WTC11 (cell line): ENCODE measurements at regions of chr10 and their contacts with region 1.

Region 1: DNA sequence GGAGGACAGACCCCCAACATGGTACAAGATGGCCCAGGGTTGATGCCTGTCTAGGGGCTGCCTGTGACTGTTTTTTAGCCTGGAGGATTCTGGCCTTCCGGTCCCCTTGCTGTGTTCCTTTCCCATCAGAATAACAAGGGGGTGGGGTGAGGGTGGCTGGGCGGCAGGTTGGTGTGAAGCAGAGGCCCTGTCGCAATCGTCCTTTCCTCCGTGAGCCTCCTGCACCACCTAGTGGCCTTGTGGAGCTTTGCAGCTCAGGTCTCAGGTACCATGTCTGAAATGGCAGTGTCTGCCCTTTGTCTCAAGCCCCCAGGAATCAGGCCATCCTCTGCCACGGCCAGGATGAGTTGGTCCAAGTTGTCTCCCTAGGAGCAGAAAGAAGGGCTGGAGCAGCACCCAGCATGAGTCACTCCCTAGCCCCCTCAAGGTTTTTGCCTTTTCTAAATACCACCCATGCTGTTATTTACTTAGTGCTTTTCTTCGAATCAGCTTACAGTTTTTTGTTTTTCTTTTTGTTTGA is 24.2 kb downstream of the TACR2 start:
- DNase-seq: peak; percentile 92
- ATAC-seq: peak; percentile 88
- H3K4me3 Mint-ChIP-seq: no peak overlapping the region
- H3K27ac Mint-ChIP-seq: peak overlapping the region; percentile 78
- H3K4me1 Mint-ChIP-seq: peaks cover 42% of the 10 kb centered on the region
- H3K27me3 Mint-ChIP-seq: no peaks in the 10 kb centered on the region
- CTCF ChIP-seq: peak; percentile 97

Region 2: DNA sequence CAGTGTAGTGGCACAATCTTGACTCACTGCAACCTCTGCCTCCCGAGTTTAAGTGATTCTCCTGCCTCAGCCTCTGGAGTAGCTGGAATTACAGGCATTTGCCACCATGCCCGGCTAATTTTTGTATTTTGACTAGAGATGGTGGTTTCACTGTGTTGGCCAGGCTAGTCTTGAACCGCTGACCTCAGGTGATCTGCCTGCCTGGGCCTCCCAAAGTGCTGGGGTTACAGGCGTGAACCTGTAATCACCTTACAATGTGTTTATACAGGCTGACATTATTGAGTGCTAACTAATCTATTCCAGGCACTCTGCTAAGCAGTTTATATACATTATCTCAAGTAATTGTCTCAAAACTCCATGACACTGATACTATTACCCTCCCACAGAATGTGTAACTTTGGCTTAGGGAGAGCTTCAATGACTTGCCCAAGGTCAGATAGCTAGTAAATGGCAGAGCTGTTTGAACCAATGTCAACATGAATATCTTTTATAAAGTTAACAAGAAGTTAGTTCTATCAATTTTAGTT is 367.1 kb before region 1 on chr10:
- CTCF ChIA-PET with region 1: no interaction called
- POLR2A ChIA-PET with region 1: no interaction called
- DNase-seq: no peak
- ATAC-seq: no peak
- H3K4me3 Mint-ChIP-seq: no peak overlapping the region
- H3K27ac Mint-ChIP-seq: no peak overlapping the region
- H3K4me1 Mint-ChIP-seq: no peaks in the 10 kb centered on the region
- H3K27me3 Mint-ChIP-seq: no peaks in the 10 kb centered on the region
- CTCF ChIP-seq: no peak

Region 3: GRCh38 chr10:69202332-69202731 is 190.2 kb before region 1 on chr10:
- CTCF ChIA-PET with region 1: no interaction called
- POLR2A ChIA-PET with region 1: no interaction called
- DNase-seq: no peak
- ATAC-seq: no peak
- H3K4me3 Mint-ChIP-seq: no peak overlapping the region
- H3K27ac Mint-ChIP-seq: no peak overlapping the region
- H3K4me1 Mint-ChIP-seq: no peaks in the 10 kb centered on the region
- H3K27me3 Mint-ChIP-seq: no peaks in the 10 kb centered on the region
- CTCF ChIP-seq: no peak

Region 4: GRCh38 chr10:69237528-69238159 is 154.9 kb before region 1 on chr10:
- CTCF ChIA-PET with region 1: interaction called, 21 read pairs
- POLR2A ChIA-PET with region 1: no interaction called
- DNase-seq: peak; percentile 94
- ATAC-seq: peak; percentile 96
- H3K4me3 Mint-ChIP-seq: no peak overlapping the region
- H3K27ac Mint-ChIP-seq: no peak overlapping the region
- H3K4me1 Mint-ChIP-seq: peaks cover 28% of the 10 kb centered on the region
- H3K27me3 Mint-ChIP-seq: no peaks in the 10 kb centered on the region; the same call in 1 of the 2 replicates
- CTCF ChIP-seq: peak; percentile 96

Region 5: DNA sequence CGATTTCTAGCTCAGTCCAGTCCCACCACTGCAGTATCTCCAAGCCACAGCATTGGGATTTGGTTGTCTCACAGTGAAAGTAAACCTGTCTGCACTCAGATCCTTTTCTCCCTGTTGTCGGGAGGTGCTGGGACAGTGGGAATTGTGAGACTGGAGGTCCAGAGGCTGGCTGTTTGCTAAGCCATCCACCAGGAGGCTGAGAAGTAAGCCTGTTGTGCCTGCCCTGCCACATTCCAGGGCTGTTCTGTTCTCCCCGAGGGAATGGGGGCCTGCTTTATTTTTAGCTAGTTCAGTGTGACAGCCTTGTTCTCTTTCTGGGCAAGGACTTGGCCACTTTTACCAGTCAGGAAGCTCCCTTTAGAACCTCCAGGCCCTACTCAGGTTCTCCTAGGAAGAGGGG is 59.3 kb before region 1 on chr10:
- CTCF ChIA-PET with region 1: interaction called, 13 read pairs
- POLR2A ChIA-PET with region 1: interaction called, 3 read pairs
- DNase-seq: peak; percentile 63
- ATAC-seq: peak; percentile 65
- H3K4me3 Mint-ChIP-seq: no peak overlapping the region
- H3K27ac Mint-ChIP-seq: peak overlapping the region; percentile 93
- H3K4me1 Mint-ChIP-seq: peaks cover 99% of the 10 kb centered on the region
- H3K27me3 Mint-ChIP-seq: no peaks in the 10 kb centered on the region
- CTCF ChIP-seq: no peak

Region 6: DNA sequence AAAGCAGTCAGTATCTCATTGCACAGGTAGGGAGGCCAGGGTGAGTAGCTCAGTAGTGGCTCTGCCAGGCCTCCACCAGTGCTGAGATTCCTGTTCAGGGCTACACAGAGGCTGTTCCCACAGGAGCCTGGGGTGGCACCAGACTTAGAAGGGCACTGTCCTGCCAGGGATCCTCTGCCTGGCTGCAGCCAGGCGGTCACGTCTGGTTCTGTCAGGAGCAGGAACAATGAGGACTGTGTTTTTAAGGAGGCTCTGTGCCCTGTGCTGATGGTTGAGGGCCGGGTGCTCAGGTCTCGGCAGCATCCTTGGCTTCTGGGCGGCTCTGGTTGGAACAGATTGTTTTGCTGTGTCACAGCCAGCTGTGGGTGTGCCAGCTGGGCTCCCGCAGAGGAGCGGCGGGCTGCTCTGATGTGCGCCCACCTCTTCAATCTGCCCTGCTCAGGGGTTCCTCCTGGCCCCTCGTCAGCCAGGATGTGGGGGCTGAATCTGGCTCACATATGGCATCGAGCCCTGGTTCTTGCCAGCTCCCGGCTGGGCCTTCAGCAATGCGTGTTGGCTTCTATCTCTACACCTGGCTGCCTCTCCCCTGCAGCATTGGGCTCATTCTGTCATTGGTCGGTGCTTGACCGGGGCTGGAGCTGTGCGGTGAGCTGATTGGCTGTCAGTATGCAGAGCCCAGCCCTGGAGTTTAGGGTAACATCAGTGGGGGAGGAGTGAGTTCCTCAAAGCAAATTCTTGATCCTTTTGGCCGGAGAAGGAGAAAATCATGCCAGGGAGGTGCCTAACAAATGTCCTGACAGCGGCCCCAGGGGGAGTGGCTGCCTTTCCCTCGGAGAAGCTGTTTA is 17.0 kb before region 1 on chr10:
- CTCF ChIA-PET with region 1: interaction called, 13 read pairs
- POLR2A ChIA-PET with region 1: interaction called, 4 read pairs
- DNase-seq: peak; percentile 82
- ATAC-seq: peak; percentile 100
- H3K4me3 Mint-ChIP-seq: no peak overlapping the region
- H3K27ac Mint-ChIP-seq: peak overlapping the region; percentile 91
- H3K4me1 Mint-ChIP-seq: peaks cover 45% of the 10 kb centered on the region
- H3K27me3 Mint-ChIP-seq: no peaks in the 10 kb centered on the region
- CTCF ChIP-seq: no peak

Region 7: DNA sequence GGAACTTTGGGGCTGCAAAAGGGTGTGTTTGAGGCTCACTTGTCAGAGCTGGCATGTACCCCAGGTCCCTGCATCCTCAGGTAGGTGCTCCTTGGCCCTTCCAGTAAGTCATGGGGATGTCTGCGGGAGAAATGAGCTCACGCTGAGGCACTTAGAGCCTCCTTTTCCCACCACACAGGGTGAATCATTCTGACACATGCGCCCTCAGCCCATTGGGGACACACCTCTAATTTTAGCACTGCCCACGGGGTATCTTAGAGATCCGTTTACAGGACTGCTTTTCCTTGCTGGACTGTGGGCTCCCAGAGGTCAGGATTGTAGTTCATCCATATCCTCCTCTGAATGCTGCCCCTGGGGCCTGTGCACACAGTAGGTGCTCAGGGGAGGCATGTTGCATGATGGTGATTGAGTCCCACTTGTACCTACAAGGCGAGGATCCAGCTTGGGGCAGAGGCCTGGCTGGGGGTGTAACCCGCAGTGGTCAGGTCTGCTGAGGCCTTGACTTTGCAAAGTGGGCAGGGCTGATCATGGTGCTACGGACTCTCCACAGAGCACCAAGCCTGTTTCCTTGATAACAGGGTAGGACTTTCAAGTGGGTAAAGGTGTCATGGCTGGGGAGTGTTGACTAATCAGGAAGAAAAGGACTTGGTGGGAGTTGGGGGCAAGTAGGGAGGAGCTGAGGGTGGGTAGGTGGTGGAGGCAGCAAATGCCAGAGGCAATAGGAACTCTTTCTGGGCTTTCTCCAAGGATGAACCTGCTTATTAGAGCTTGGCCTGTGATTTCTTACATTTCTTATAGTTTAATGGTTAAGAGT is 64.5 kb after region 1 on chr10:
- CTCF ChIA-PET with region 1: no interaction called
- POLR2A ChIA-PET with region 1: no interaction called
- DNase-seq: no peak
- ATAC-seq: no peak
- H3K4me3 Mint-ChIP-seq: no peak overlapping the region
- H3K27ac Mint-ChIP-seq: no peak overlapping the region
- H3K4me1 Mint-ChIP-seq: peaks cover 12% of the 10 kb centered on the region
- H3K27me3 Mint-ChIP-seq: peaks cover 21% of the 10 kb centered on the region
- CTCF ChIP-seq: no peak

Region 8: DNA sequence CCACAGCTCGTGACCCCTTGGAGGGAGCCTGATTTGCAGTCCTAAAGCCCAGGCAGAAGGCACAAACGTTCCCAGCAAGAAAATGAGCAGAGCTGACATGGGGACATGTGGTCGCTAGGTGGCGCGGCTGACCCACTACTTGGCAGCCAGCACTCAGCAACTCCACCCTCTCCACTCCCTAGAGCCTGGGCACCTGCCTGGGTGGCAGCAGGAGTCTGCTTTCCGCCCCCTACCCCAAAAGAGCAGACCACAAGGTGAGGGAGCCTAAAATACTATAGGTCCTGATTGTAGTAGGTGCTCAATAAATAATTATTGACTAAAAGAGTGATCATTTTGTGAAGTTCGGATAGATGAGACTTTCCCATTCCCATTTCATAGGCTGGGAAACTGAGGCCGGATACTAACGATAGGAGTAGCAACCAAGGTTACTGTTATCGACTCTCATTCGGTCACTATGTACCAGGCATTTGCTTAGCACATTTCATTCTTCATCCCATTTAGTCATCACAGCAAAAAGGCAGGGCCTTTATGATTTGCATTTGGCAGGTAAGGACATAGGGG is 123.2 kb after region 1 on chr10:
- CTCF ChIA-PET with region 1: no interaction called
- POLR2A ChIA-PET with region 1: no interaction called
- DNase-seq: peak; percentile 88
- ATAC-seq: peak; percentile 89
- H3K4me3 Mint-ChIP-seq: no peak overlapping the region
- H3K27ac Mint-ChIP-seq: no peak overlapping the region
- H3K4me1 Mint-ChIP-seq: peaks cover 19% of the 10 kb centered on the region
- H3K27me3 Mint-ChIP-seq: no peaks in the 10 kb centered on the region
- CTCF ChIP-seq: peak; percentile 94